ENCODE measurements at regions of chr20 and their contacts with region 1.

Region 1: DNA sequence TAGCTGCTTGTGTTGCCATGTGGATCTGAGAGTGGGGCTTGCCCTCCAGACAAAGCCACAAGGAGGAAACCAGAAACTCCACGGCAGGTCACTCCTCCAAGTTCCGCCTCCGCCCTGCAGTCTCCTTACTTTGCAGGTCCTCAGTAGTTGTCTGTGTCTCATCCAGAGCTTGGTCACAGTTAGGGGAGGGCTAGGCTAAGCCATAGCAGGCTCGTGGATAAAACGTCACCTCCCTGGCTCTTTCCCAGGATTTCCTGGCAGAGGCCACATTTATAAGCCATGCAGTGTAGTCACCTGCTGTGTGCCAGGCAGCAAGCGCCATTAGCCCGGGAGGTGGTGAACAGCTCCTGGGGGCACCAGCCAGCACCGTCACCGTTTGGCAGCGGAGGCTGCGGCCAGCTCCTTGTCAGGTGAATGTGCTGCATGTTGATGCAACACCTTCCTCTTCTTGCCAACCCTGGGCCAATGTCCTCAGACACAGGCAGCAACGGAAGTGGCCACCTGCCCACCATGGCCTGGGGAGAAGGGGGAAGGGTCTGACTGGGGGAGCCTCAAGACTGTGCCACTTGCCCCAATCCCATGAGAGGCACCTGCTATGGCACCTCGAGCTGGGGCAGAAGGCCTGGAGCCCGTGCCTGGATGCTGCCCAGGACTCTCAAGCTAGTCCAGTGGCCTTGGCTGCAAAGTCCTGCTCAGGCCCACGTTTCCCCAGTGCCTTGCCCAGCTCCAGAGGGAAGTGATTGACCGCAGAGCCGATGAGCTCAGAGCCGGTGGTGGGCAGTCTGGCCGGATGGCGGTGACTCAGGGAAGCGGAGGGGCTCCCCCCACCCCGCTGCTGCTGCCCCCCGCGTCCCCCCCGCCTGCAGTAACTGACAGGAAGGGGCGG is 39.0 kb upstream of the SLCO4A1 start:
- DNase-seq: peak; percentile 45
- H3K4me3 Mint-ChIP-seq: peak overlapping the region; percentile 64
- H3K27ac Mint-ChIP-seq: peak overlapping the region; percentile 79
- H3K4me1 Mint-ChIP-seq: peaks cover 32% of the 10 kb centered on the region
- H3K27me3 Mint-ChIP-seq: peaks cover 41% of the 10 kb centered on the region

Region 2: GRCh38 chr20:62413896-62414481 is 189.3 kb before region 1 on chr20:
- CTCF ChIA-PET with region 1: no interaction called
- POLR2A ChIA-PET with region 1: no interaction called
- DNase-seq: no peak
- H3K4me3 Mint-ChIP-seq: no peak overlapping the region
- H3K27ac Mint-ChIP-seq: no peak overlapping the region
- H3K4me1 Mint-ChIP-seq: peaks cover 12% of the 10 kb centered on the region
- H3K27me3 Mint-ChIP-seq: no peaks in the 10 kb centered on the region

Region 3: GRCh38 chr20:62616728-62617621 is 13.7 kb after region 1 on chr20:
- CTCF ChIA-PET with region 1: interaction called, 11 read pairs
- POLR2A ChIA-PET with region 1: no interaction called
- DNase-seq: peak; percentile 70
- H3K4me3 Mint-ChIP-seq: no peak overlapping the region
- H3K27ac Mint-ChIP-seq: peak overlapping the region; percentile 95
- H3K4me1 Mint-ChIP-seq: peaks cover 38% of the 10 kb centered on the region
- H3K27me3 Mint-ChIP-seq: peaks cover 13% of the 10 kb centered on the region